Astrocyte of the cerebellum (primary cell): ENCODE measurements at regions of chr10 and their contacts with region 1.

Region 1: GRCh38 chr10:108966005-108966404 is 957.3 kb downstream of the XPNPEP1 start:
- DNase-seq: no peak
- H3K4me3 ChIP-seq: no peak overlapping the region
- CTCF ChIP-seq: no peak

Region 2: DNA sequence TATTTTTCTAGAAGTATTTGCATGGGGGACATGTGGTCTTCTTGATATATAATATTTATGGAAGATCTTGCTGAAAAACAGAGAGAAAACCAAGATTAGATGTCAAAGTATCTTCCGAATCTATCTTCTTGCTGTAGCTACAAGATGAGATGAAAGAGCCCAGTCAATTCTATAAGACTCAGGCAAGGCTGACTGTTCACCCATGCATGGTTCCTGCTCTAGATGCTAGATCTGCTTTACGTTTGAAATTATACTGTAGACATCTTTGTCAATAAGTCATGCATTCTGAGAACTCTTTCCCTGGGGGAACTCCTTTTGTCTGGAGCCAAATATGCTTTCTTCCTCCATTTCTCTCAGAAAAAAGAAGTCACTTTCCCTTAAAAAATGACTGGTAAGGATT is 334.7 kb before region 1 on chr10:
- in situ Hi-C with region 1: no loop called
- DNase-seq: no peak
- H3K4me3 ChIP-seq: no peak overlapping the region
- CTCF ChIP-seq: no peak

Region 3: GRCh38 chr10:108822026-108822425 is 144.0 kb before region 1 on chr10:
- in situ Hi-C with region 1: no loop called
- DNase-seq: no peak
- H3K4me3 ChIP-seq: no peak overlapping the region
- CTCF ChIP-seq: no peak

Region 4: DNA sequence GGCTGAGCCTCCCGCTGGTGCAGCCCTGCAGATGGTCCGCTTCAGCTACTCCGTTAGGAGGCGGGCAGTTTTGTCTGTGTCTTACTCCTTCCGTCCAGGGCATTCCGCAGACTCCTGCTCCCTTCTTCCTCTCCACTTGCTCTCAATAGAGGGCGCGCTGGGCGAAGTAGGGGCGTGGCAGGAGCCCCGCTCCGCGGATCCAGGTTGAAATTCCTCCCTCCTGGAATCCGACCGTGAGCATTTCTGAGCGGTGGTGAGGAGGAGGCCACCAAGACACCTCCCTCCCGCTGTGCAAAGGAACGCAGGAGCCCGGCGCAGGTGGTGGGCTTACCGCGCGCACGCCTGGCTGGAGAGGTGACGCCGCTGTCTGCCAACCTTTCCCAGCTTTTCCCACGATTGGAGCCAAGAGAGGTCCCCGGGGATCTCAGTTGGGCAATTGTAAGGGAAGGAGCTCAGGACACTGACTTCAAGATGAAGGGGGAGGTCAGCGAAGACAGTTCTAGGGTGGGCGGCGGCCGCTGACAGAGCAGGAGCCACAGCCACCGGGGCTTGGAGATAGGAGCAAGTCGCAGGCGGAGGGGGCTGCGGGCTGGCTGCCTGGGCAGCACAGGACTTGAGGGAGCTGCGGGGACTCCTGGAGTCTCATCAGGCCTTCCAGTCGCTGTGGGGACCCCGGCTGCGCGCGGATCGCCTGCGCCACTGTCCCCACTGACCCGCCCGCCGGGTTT is 54.0 kb before region 1 on chr10:
- in situ Hi-C with region 1: loop called (anchors 5 kb)
- DNase-seq: peak; percentile 38
- H3K4me3 ChIP-seq: peak overlapping the region; percentile 58
- CTCF ChIP-seq: peak; percentile 84